ENCODE measurements at regions of chr9 and their contacts with region 1.

Region 1: GRCh38 chr9:92716557-92716956 is 46.6 kb upstream of the IPPK start:
- DNase-seq: peak; percentile 77

Region 2: GRCh38 chr9:92790542-92791527 is 74.3 kb after region 1 on chr9:
- CTCF ChIA-PET with region 1: interaction called, 20 read pairs
- POLR2A ChIA-PET with region 1: no interaction called
- DNase-seq: peak; percentile 80

Measured in HEK293T (cell line).